Activated CD8-positive, alpha-beta T cell treated with anti-CD3 and anti-CD28 coated beads for 36 hours (primary cell): ENCODE measurements at regions of chr14 and their contacts with region 1.

Region 1: DNA sequence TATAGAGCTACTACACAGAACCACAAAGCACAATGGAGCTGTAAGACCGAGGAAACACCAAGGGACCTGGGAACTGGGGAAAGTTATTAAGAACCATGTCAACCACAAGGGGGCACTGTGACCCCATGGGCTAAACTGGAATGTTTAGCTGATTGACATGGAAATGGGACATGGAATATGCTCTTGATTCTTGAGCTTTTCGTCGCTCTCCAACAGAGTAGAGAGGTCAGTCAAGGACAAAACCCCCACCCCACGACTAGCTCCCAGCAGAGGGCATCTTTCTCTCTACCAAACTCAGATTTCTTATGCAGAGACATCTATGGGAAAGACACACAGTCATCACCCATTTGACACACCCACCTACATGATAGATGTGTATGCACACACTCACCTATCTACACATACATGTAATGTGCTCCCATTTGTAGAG is 10.1 kb downstream of the NDRG2 start:
- DNase-seq: peak; percentile 86
- ATAC-seq: peak; percentile 73
- H3K4me3 Mint-ChIP-seq: no peak overlapping the region
- H3K27ac Mint-ChIP-seq: no peak overlapping the region
- H3K4me1 Mint-ChIP-seq: no peaks in the 10 kb centered on the region
- H3K27me3 Mint-ChIP-seq: peaks cover 12% of the 10 kb centered on the region
- CTCF ChIP-seq: peak; percentile 89

Region 2: GRCh38 chr14:20998664-20999366 is 16.0 kb before region 1 on chr14 and contains the start of gene SLC39A2:
- CTCF ChIA-PET with region 1: interaction called, 208 read pairs
- POLR2A ChIA-PET with region 1: no interaction called
- intact Hi-C with region 1: no loop called
- DNase-seq: no peak
- ATAC-seq: no peak
- H3K4me3 Mint-ChIP-seq: no peak within 1 kb of the TSS
- H3K27ac Mint-ChIP-seq: peak within 1 kb of the TSS; percentile 19
- H3K4me1 Mint-ChIP-seq: peaks cover 8% of the 10 kb centered on the region
- H3K27me3 Mint-ChIP-seq: no peaks in the 10 kb centered on the region
- CTCF ChIP-seq: no peak
- total RNA-seq, gene SLC39A2: not detected

Region 3: GRCh38 chr14:21039585-21040369 is 25.0 kb after region 1 on chr14:
- CTCF ChIA-PET with region 1: interaction called, 218 read pairs
- POLR2A ChIA-PET with region 1: interaction called, 3 read pairs
- intact Hi-C with region 1: loop called (anchors 1 kb)
- DNase-seq: peak; percentile 26
- ATAC-seq: peak; percentile 86
- H3K4me3 Mint-ChIP-seq: no peak overlapping the region
- H3K27ac Mint-ChIP-seq: no peak overlapping the region
- H3K4me1 Mint-ChIP-seq: peaks cover 4% of the 10 kb centered on the region
- H3K27me3 Mint-ChIP-seq: peaks cover 3% of the 10 kb centered on the region
- CTCF ChIP-seq: peak; percentile 50

Region 4: GRCh38 chr14:21057803-21058675 is 43.3 kb after region 1 on chr14 and contains the start of gene RNASE8:
- CTCF ChIA-PET with region 1: interaction called, 13 read pairs
- POLR2A ChIA-PET with region 1: no interaction called
- intact Hi-C with region 1: no loop called
- DNase-seq: no peak
- ATAC-seq: peak; percentile 42
- H3K4me3 Mint-ChIP-seq: no peak within 1 kb of the TSS
- H3K27ac Mint-ChIP-seq: no peak within 1 kb of the TSS
- H3K4me1 Mint-ChIP-seq: no peaks in the 10 kb centered on the region
- H3K27me3 Mint-ChIP-seq: peaks cover 15% of the 10 kb centered on the region
- CTCF ChIP-seq: no peak
- total RNA-seq, gene RNASE8: not detected

Region 5: GRCh38 chr14:21084988-21085853 is 70.4 kb after region 1 on chr14:
- CTCF ChIA-PET with region 1: interaction called, 63 read pairs
- POLR2A ChIA-PET with region 1: interaction called, 4 read pairs
- intact Hi-C with region 1: no loop called
- DNase-seq: no peak
- ATAC-seq: no peak
- H3K4me3 Mint-ChIP-seq: no peak overlapping the region
- H3K27ac Mint-ChIP-seq: no peak overlapping the region
- H3K4me1 Mint-ChIP-seq: peaks cover 16% of the 10 kb centered on the region
- H3K27me3 Mint-ChIP-seq: no peaks in the 10 kb centered on the region
- CTCF ChIP-seq: no peak

Region 6: DNA sequence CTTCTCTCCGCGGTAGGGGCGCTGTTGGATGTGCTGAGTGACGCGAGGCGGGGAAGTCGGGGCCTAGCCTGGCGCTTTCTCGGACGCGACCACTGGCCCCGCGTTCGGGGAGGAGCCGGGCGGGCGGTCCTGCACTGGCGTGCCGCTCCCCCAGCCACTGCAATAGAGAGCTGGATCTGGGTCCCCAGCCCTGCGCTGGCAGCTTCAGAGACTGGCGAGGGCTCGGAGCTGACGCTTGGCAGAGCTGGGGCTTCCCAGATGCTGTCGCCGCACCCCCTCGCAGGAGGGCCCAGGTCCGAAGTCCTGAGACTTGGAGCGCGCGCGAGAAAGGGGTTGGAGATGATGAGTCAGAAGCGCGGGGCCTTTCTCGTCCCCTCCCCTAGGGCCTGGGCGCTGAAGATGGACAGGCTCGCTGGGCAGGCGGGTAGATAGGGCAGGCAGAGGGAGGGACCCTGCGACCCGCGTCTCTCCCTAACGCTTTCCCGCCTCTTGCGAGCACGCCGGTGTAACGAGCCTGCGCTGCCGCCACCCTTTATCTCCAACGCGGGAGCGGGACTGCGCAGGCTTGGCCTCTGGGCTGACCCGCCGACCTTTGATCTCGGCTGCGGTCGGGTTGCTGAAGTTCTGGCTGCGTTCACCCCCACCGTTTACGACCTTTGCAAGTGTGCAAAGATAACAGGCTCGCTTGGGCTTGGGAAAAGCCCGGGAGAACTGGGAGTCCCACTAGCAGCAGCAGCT is 89.1 kb after region 1 on chr14:
- CTCF ChIA-PET with region 1: interaction called, 267 read pairs
- POLR2A ChIA-PET with region 1: interaction called, 8 read pairs
- intact Hi-C with region 1: no loop called
- DNase-seq: peak; percentile 98
- ATAC-seq: peak; percentile 88
- H3K4me3 Mint-ChIP-seq: peak overlapping the region; percentile 80
- H3K27ac Mint-ChIP-seq: peak overlapping the region; percentile 90
- H3K4me1 Mint-ChIP-seq: peaks cover 36% of the 10 kb centered on the region
- H3K27me3 Mint-ChIP-seq: no peaks in the 10 kb centered on the region
- CTCF ChIP-seq: peak; percentile 64